ENCODE measurements at regions of chr15 and their contacts with region 1.

Region 1: GRCh38 chr15:31391687-31392671 is 65.3 kb downstream of the KLF13 start:
- DNase-seq: peak; percentile 76 to 87
- ATAC-seq: peak; percentile 50 to 59
- H3K4me3 ChIP-seq: peak overlapping the region; percentile 61 to 84 (median 73)
- H3K27ac ChIP-seq: peak overlapping the region; percentile 85 to 96 (median 91)
- H3K4me1 ChIP-seq: peaks cover 30 to 51% of the 10 kb centered on the region in 2 donors
- H3K27me3 ChIP-seq: no peaks in the 10 kb centered on the region
- CTCF ChIP-seq: peak in 1 of 5 experiments; percentile 16
- POLR2A ChIP-seq: peak; percentile 94 to 96

Region 2: GRCh38 chr15:31179693-31180092 is 212.3 kb before region 1 on chr15:
- in situ Hi-C with region 1: no loop called
- intact Hi-C with region 1: no loop called
- DNase-seq: no peak
- ATAC-seq: no peak
- H3K4me3 ChIP-seq: no peak overlapping the region
- H3K27ac ChIP-seq: no peak overlapping the region
- H3K4me1 ChIP-seq: no peaks in the 10 kb centered on the region
- H3K27me3 ChIP-seq: no peaks in the 10 kb centered on the region
- CTCF ChIP-seq: no peak
- POLR2A ChIP-seq: no peak

Region 3: GRCh38 chr15:31338879-31339557 is 53.0 kb before region 1 on chr15:
- in situ Hi-C with region 1: loop called in 1 of 4 experiments (anchors 10 kb)
- intact Hi-C with region 1: no loop called
- DNase-seq: peak in 1 of 2 donors; percentile 66
- ATAC-seq: peak in 1 of 2 donors; percentile 33
- H3K4me3 ChIP-seq: peak overlapping the region in 2 of 4 donors; percentile 3 to 5
- H3K27ac ChIP-seq: peak overlapping the region; percentile 69 to 96 (median 79)
- H3K4me1 ChIP-seq: peaks cover 92 to 94% of the 10 kb centered on the region in 2 donors
- H3K27me3 ChIP-seq: no peaks in the 10 kb centered on the region
- CTCF ChIP-seq: no peak
- POLR2A ChIP-seq: no peak